AG04449 (cell line): ENCODE measurements at regions of chr17 and their contacts with region 1.

Region 1: DNA sequence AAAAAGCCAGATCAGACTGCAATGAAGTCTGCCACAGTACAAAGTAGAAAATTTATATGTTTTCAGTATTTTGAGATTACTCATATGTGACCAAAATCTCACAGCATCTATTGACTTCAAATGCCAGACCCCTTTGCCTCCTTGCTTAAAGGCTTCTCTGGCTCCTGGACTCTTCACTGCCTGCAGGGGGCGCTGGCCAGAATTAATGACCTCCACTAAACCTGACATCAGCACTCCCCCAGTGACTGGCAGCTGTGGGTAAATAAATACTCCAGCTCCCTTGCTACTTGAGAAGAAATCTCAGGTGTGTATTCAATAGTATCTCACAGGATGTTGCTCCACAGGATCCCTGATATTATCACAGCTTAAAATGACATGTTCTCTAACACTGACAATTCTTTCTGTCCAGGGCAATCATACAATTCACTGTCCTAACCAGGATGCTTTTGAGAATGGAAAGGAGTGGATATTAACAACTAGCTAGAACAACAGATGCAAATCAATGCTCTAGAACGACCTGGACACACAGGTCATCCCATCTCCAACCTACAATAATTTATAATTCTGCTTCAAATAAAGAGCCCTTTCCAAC is 4.0 kb downstream of the BECN1 start:
- DNase-seq: no peak
- H3K4me3 ChIP-seq: no peak overlapping the region
- CTCF ChIP-seq: peak; percentile 66

Region 2: GRCh38 chr17:42512626-42513250 is 307.3 kb before region 1 on chr17:
- CTCF ChIA-PET with region 1: no interaction called
- POLR2A ChIA-PET with region 1: no interaction called
- DNase-seq: no peak
- H3K4me3 ChIP-seq: no peak overlapping the region
- CTCF ChIP-seq: no peak

Region 3: GRCh38 chr17:42692489-42692888 is 127.6 kb before region 1 on chr17:
- CTCF ChIA-PET with region 1: no interaction called
- POLR2A ChIA-PET with region 1: no interaction called
- DNase-seq: no peak
- H3K4me3 ChIP-seq: no peak overlapping the region
- CTCF ChIP-seq: no peak

Region 4: DNA sequence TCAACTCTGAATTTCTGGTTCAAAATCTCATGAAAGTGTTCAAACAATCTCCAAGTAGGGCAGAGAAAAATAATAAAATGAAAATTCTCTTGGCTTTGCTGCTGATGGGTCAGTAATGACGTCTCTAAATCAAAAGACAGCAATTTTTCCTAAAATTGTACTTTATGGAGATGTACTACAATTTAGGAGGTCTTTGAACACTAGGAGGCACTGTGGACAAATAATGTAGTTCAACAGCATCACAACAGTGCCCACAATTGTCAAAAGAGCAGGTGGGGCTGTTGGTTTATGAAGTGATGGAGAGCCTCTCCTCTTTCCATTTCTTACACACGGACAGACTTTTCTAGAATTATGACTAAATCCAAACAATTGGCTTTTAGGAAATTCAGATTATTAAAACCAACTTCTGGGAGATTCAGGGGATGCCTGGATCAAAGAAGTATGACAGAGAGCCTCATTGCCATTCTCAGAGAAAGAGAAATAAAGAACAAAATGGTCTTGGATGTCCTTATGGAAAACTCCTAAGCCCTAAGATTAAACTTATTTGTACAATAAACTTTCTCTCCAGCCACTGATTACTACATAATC is 99.0 kb before region 1 on chr17:
- CTCF ChIA-PET with region 1: interaction called, 32 read pairs
- POLR2A ChIA-PET with region 1: no interaction called
- DNase-seq: no peak
- H3K4me3 ChIP-seq: no peak overlapping the region
- CTCF ChIP-seq: peak; percentile 57

Region 5: GRCh38 chr17:42773290-42774035 is 46.6 kb before region 1 on chr17 and contains the start of gene VPS25:
- CTCF ChIA-PET with region 1: interaction called, 10 read pairs
- POLR2A ChIA-PET with region 1: interaction called, 3 read pairs
- DNase-seq: no peak
- H3K4me3 ChIP-seq: peak within 1 kb of the TSS; percentile 91
- CTCF ChIP-seq: peak; percentile 37

Region 6: DNA sequence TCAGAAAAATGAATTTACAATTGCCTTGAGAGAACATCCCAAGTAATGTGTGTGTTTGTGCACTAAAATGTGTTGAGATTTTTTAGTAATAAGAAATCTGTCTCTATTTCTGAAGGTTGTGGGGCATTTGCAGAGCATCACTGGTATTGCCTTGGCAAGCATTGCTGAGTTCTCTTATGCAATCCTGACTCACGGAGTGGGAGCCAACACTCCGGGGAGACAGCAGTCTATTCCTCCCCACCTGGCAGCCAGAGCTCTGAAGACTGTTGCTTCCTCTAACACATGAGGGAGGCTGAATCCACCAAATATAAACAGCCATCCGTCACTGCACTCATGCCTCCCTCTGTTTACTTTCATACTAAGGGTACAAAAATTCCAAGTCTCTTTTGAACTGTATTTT is 10.8 kb before region 1 on chr17:
- CTCF ChIA-PET with region 1: interaction called, 134 read pairs
- POLR2A ChIA-PET with region 1: interaction called, 5 read pairs
- DNase-seq: no peak
- H3K4me3 ChIP-seq: no peak overlapping the region
- CTCF ChIP-seq: no peak

Region 7: GRCh38 chr17:42843358-42843934 is 23.4 kb after region 1 on chr17:
- CTCF ChIA-PET with region 1: interaction called, 133 read pairs
- POLR2A ChIA-PET with region 1: interaction called, 5 read pairs
- DNase-seq: no peak
- H3K4me3 ChIP-seq: no peak overlapping the region
- CTCF ChIP-seq: peak; percentile 94

Region 8: DNA sequence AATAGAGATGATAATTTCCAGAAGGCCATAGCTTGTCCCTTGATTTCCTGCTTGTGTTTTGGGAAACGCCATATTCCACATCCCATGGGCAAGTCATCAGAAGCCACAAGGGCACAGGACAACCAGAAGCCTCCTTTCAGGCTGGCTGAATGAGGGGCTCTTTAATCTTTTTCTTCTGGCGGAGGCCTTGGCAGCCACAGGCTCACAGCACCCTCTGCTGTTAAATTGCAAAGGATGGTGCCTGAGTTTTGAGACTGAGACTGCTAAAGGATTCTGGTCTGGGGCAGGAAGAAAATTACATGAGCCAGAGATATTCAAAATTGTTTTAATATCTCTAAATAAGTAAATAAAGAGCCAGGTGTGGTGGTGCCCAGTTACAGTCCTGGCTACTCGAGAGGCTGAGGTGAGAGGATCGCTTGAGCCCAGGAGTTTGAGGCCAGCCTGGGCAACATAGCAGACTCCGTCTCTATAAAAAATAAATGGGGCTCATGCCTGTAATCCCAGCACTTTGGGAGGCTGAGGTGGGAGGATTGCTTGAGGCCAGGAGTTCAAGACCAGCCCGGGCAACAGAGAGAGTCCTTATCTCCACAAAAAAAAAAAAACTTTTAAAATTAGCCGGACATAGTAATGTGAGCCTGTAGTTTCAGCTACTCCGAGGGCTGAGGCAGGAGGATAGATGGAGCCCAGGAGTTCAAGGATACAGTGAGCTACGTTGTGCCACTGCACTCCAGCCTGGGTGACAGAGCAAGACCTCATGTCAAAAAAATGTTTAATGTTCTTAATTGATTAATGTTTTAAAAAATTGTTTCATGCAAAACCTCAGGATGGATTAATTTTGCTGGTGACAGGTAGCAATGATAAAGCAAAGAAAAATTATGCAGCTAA is 117.9 kb after region 1 on chr17:
- CTCF ChIA-PET with region 1: interaction called, 20 read pairs
- POLR2A ChIA-PET with region 1: no interaction called
- DNase-seq: peak; percentile 5
- H3K4me3 ChIP-seq: no peak overlapping the region
- CTCF ChIP-seq: peak; percentile 71